Activated naive CD4-positive, alpha-beta T cell treated with anti-CD3 and anti-CD28 coated beads for 36 hours (primary cell): ENCODE measurements at regions of chr14 and their contacts with region 1.

Region 1: DNA sequence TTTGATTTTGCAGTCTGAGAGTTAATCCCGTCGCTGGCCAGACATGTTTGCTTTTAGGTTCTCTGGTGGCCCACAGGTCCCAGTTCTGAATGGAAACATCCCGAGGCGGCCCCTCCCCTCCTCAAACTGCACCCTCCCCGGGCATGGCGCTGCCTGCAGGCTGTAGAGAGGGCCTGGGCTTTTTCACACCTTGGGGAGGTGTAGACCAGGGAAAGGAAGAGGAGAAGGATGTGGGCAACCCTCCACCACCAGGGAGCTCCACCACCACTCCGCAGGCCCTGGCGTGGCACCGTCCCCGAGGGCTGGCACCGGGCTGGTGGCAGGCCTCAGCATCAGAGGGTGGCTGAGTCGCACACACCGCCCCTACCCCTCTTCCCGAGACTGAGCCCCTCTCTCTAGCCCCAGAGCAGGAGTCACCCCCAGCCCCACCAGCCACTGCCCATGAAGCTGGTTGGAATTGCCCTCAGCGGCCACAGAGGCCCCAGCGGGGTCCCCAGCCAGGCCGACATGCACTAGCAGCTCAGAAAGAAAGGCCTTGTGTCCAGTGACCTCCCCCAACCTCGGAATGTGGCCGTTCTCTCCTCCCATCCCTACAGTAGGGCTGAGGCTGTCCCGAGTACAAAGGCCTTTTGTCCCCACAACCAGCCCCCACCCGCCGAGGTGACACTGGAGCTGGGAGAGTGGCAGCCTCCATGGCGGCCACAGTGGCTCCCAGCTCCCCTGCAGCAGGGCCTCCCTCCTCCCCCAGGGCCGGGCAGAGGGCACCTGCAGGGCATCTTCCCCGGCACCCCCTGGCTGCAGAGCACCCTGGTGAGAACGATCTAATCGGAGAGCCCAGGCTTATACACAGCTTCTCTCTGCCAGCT is 23.5 kb upstream of the INF2 start:
- DNase-seq: peak; percentile 77
- H3K4me3 Mint-ChIP-seq: no peak overlapping the region
- H3K27ac Mint-ChIP-seq: no peak overlapping the region
- H3K4me1 Mint-ChIP-seq: peaks cover 20% of the 10 kb centered on the region
- H3K27me3 Mint-ChIP-seq: no peaks in the 10 kb centered on the region

Region 2: GRCh38 chr14:103832046-103832445 is 833.8 kb before region 1 on chr14:
- CTCF ChIA-PET with region 1: no interaction called
- intact Hi-C with region 1: no loop called
- DNase-seq: no peak
- H3K4me3 Mint-ChIP-seq: no peak overlapping the region
- H3K27ac Mint-ChIP-seq: no peak overlapping the region
- H3K4me1 Mint-ChIP-seq: peaks cover 17% of the 10 kb centered on the region
- H3K27me3 Mint-ChIP-seq: no peaks in the 10 kb centered on the region

Region 3: GRCh38 chr14:104677512-104678332 is 11.8 kb after region 1 on chr14:
- CTCF ChIA-PET with region 1: interaction called, 3 read pairs
- intact Hi-C with region 1: loop called (anchors 1 kb)
- DNase-seq: peak; percentile 83
- H3K4me3 Mint-ChIP-seq: peak overlapping the region; percentile 67
- H3K27ac Mint-ChIP-seq: peak overlapping the region; percentile 61
- H3K4me1 Mint-ChIP-seq: peaks cover 18% of the 10 kb centered on the region
- H3K27me3 Mint-ChIP-seq: no peaks in the 10 kb centered on the region

Region 4: GRCh38 chr14:104689881-104690786 is 24.2 kb after region 1 on chr14:
- CTCF ChIA-PET with region 1: interaction called, 4 read pairs
- intact Hi-C with region 1: loop called (anchors 2 kb)
- DNase-seq: peak; percentile 54
- H3K4me3 Mint-ChIP-seq: peak overlapping the region; percentile 73
- H3K27ac Mint-ChIP-seq: peak overlapping the region; percentile 36
- H3K4me1 Mint-ChIP-seq: peaks cover 54% of the 10 kb centered on the region
- H3K27me3 Mint-ChIP-seq: no peaks in the 10 kb centered on the region

Region 5: GRCh38 chr14:104708606-104709268 is 42.8 kb after region 1 on chr14:
- CTCF ChIA-PET with region 1: interaction called, 7 read pairs
- intact Hi-C with region 1: loop called (anchors 1 kb)
- DNase-seq: peak; percentile 80
- H3K4me3 Mint-ChIP-seq: no peak overlapping the region
- H3K27ac Mint-ChIP-seq: no peak overlapping the region
- H3K4me1 Mint-ChIP-seq: peaks cover 2% of the 10 kb centered on the region
- H3K27me3 Mint-ChIP-seq: no peaks in the 10 kb centered on the region